ENCODE measurements at regions of chr14 and their contacts with region 1.

Region 1: GRCh38 chr14:23120541-23121251 is 1.6 kb upstream of the CEBPE start:
- DNase-seq: peak; percentile 91
- ATAC-seq: peak; percentile 93
- H3K4me3 Mint-ChIP-seq: no peak overlapping the region
- H3K27ac Mint-ChIP-seq: peak overlapping the region; percentile 68
- H3K4me1 Mint-ChIP-seq: peaks cover 47% of the 10 kb centered on the region
- H3K27me3 Mint-ChIP-seq: no peaks in the 10 kb centered on the region

Region 2: DNA sequence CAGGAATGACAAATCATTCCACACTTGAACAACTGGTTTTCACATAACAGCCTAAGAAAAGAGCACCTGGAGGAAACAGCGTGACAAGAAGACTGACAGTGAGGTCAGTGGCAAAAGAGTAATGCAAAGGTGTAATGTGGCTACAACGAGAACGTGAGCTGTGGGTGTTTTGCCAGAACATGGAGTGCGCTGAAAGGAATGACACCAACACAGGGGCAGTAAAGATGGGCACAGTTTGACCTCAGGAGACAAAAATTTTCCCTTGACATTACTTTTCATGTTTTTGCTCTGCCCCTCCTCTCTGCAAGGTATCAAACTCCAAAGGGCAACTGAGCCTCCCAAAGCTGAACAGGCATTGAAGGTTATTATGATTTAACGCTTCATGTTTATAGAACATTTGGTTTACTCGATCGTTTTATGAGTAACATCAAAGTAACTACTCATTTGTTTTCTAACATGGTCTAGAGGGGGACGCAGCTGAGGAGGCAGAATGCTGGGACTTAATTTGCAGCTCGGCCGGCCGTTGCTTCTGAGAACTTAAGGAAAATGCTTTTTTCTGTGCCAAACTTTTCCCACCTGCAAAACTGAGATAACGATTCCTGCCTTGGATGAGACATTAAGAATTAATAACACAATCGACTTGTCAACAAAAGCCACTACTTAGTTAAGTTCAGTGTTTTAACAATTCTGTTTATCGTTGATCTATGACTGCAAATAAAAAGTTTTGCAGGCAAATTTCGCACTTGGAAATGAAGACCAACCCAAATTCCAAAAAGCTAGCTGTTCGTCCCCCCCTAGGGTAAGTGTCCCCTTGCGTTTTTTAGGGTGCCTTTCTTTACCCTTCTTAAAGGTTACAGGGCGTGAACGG is 164.8 kb before region 1 on chr14:
- CTCF ChIA-PET with region 1: no interaction called
- POLR2A ChIA-PET with region 1: no interaction called
- intact Hi-C with region 1: no loop called
- DNase-seq: no peak
- ATAC-seq: no peak
- H3K4me3 Mint-ChIP-seq: peak overlapping the region; percentile 88
- H3K27ac Mint-ChIP-seq: peak overlapping the region; percentile 90
- H3K4me1 Mint-ChIP-seq: peaks cover 18% of the 10 kb centered on the region
- H3K27me3 Mint-ChIP-seq: no peaks in the 10 kb centered on the region

Region 3: GRCh38 chr14:23076785-23077408 is 43.8 kb before region 1 on chr14:
- CTCF ChIA-PET with region 1: interaction called, 30 read pairs
- POLR2A ChIA-PET with region 1: interaction called, 5 read pairs
- intact Hi-C with region 1: no loop called
- DNase-seq: peak; percentile 46
- ATAC-seq: peak; percentile 59
- H3K4me3 Mint-ChIP-seq: no peak overlapping the region
- H3K27ac Mint-ChIP-seq: peak overlapping the region; percentile 17
- H3K4me1 Mint-ChIP-seq: peaks cover 5% of the 10 kb centered on the region
- H3K27me3 Mint-ChIP-seq: no peaks in the 10 kb centered on the region

Region 4: GRCh38 chr14:23141671-23142451 is 21.2 kb after region 1 on chr14:
- CTCF ChIA-PET with region 1: interaction called, 15 read pairs
- POLR2A ChIA-PET with region 1: no interaction called
- intact Hi-C with region 1: no loop called
- DNase-seq: no peak
- ATAC-seq: no peak
- H3K4me3 Mint-ChIP-seq: no peak overlapping the region
- H3K27ac Mint-ChIP-seq: no peak overlapping the region
- H3K4me1 Mint-ChIP-seq: no peaks in the 10 kb centered on the region
- H3K27me3 Mint-ChIP-seq: peaks cover 4% of the 10 kb centered on the region

Region 5: DNA sequence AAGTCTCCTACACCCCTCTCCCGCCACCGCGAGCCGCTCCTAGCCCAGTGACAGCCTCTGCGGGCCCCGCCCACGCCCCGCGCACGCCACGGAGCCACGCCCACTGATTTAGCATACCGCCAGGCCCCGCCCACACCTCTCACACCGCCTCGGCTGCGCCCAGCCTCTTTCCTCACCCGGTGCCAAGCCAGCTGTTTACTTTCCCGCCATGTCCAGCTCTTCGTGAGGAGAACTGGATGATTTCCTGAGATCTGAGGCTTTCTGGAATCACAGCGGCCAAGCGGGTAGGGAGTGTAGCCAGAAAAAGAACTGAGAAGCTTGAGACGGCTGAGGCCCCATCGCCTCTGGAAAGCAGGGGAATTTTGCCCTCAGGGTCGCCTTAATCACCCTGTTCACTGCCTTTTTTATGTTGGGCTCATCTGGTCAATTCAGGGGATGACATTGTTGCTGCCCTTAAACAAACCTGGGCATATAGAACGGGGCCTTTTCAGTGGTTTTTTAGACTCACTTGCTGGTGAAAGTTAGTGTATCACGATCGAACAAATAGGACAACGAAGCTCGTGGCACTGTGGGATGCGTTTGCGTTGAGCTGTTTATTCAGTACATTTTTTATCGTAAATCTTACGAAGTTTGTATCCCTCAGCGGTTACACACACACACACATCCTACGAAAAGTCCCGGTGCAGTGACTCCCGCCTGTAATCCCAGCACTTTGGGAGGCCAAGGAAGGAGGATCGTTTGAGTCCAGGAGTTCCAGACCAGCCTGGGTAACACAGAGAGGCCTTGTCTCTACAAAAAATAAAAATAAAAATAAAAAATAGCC is 117.3 kb after region 1 on chr14 and contains the start of gene RNF212B:
- CTCF ChIA-PET with region 1: interaction called, 10 read pairs
- POLR2A ChIA-PET with region 1: no interaction called
- intact Hi-C with region 1: loop called in 1 of 2 experiments (anchors 2 kb)
- DNase-seq: peak; percentile 95
- ATAC-seq: peak; percentile 99
- H3K4me3 Mint-ChIP-seq: peak within 1 kb of the TSS; percentile 29
- H3K27ac Mint-ChIP-seq: no peak within 1 kb of the TSS
- H3K4me1 Mint-ChIP-seq: peaks cover 3% of the 10 kb centered on the region
- H3K27me3 Mint-ChIP-seq: peaks cover 20% of the 10 kb centered on the region
- total RNA-seq, gene RNF212B: not detected

Region 6: DNA sequence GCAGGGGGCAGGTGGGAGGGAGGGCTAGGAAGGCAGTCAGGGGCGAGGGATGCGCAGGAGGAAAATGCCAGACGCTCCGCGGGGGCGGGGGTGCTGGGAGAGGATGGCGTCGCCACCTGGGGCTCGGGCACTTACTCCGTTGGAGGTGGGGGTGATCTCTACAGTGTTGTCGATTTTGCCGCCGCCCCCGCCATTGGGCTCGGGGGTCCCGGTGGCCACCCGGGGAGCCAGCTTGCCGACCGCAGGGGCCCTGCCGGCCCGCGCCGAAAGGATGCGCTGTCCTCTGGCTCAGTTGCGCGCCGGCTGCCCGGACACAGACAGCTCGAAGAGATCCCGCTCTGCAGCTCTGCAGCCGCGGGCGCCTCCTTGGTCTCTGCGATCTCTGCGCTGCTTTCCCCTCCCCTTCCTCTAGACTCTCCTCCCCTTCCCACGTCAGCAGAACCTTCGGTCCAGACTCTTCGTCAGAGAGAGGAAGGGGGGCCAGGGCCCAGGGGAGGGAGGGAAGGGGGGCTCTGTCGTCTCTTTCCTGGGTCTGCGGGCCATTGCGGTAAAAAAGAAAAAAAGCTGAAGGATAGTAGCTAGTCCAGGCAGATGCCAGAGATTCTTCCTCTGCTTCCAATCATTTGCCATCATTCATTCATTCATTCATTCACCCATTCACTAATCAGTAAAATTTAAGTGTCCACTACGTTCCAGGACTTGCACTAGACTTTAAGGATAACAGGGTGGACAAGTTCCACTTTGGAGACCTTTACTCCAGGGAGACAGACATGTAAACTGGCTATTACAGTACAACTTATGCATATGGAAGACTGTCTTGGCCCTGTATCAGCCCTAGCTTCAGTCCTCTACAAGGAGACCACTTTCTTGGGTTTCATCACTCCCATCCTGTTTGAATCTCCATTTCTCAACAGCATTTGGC is 232.1 kb after region 1 on chr14 and contains the start of gene SLC22A17:
- CTCF ChIA-PET with region 1: no interaction called
- POLR2A ChIA-PET with region 1: no interaction called
- intact Hi-C with region 1: no loop called
- DNase-seq: peak; percentile 77
- ATAC-seq: peak; percentile 96
- H3K4me3 Mint-ChIP-seq: peak within 1 kb of the TSS; percentile 68
- H3K27ac Mint-ChIP-seq: no peak within 1 kb of the TSS
- H3K4me1 Mint-ChIP-seq: peaks cover 8% of the 10 kb centered on the region
- H3K27me3 Mint-ChIP-seq: peaks cover 34% of the 10 kb centered on the region
- total RNA-seq, gene SLC22A17: 4.7 to 5.3 TPM

Region 7: DNA sequence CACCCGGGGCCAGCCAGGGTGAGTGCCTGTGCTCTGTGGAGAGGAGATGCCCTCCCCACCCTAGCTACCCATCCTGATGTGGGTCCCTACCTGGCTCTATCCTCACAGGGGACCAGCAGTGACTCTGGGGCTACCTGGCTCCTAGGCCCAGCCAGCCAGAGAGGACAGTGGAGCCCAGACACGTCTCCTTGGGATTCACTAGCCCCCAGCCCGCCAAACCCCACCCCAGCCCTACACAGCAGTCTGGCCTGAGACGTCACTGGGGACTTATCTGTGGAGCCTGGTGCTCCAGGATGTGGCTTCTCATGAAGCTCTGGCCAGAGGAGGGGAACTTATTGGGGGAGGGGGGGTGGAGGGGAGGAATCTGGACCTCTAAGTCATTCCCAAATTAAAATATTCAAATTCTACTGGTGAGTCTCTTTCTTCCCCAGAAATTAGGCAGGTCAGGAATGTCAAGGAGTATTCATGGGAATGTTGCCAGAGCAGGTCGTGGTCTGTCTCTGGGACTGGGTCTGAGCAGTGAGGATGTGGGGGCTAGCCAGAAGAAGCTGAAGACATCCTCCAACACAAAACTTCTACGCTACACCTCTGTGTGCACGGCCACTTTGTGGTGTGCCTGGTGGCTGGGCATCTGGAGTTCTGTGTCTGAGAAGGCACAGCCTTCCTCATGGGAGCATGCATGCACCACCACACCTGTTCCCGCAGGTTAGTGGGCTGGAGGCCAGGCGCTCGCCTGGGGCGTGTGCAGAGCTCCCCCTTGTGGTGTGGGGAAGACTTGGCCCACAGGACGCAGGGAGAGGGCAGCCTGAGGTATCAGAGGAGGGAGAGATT is 258.9 kb after region 1 on chr14:
- CTCF ChIA-PET with region 1: interaction called, 23 read pairs
- POLR2A ChIA-PET with region 1: no interaction called
- intact Hi-C with region 1: loop called (anchors 1 to 2 kb)
- DNase-seq: peak; percentile 78
- ATAC-seq: peak; percentile 92
- H3K4me3 Mint-ChIP-seq: no peak overlapping the region
- H3K27ac Mint-ChIP-seq: no peak overlapping the region
- H3K4me1 Mint-ChIP-seq: no peaks in the 10 kb centered on the region
- H3K27me3 Mint-ChIP-seq: peaks cover 2% of the 10 kb centered on the region

Measured in activated CD4-positive, alpha-beta T cell treated with anti-CD3 and anti-CD28 coated beads for 36 hours (primary cell).